Activated T-helper 1 cell treated with anti-CD3 and anti-CD28 coated beads, Interleukin-12 subunit alpha, Interleukin-12 subunit beta, Interleukin-2, Interleukin-4 antibody, amounts not matched to agents 30 ng/mL and 10 ng/mL and 1 ng/mL, durations not matched to agents 14 hours and 24 hours and 36 hours (primary cell): ENCODE measurements at regions of chrX and their contacts with region 1.

Region 1: DNA sequence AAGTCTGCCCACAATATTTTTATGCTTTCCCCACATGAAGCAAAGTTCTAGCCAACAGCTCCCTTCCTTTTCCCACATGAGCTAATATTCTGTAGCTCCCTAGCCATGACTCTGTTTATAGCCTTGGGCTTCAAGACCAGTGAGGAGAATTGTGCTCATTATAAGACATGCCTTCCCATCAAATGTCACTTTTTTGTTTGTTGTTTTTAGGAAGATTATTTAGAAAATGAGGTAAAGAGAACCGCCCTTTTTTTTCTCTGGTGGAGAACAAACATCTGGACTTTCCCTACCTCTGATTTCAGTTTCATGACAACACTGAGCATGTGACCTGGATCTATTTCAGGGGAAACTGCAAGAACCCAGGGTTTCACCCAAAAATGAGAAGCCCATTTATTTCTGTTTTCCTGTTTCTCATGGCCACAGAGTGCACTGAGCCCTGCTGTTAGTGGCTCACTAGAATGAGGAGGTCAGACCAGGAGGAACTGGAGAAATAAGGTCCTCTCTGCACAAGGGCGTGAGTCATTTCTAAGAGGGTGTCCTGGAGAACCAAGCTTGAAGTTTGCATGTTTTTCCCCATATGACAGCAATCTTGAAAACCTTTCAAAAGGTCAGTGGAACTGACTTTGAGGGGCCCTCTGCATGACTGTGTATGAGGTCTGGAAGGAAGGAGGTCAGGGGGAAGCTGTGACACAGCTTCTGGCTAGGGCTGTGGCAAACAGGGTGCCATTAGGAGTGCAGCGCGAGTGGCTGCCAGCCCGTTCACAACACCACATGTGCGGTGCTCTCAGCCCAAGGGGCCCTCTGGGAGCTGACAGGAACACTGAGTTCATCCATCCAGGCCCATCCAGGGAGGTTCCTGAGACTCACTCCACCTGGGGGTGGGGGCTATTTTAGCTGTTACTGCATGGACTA is 55.2 kb downstream of the CHST7 start:
- DNase-seq: no peak
- H3K4me3 Mint-ChIP-seq: peak overlapping the region; percentile 66
- H3K27ac Mint-ChIP-seq: peak overlapping the region; percentile 93
- H3K4me1 Mint-ChIP-seq: peaks cover 34% of the 10 kb centered on the region
- H3K27me3 Mint-ChIP-seq: no peaks in the 10 kb centered on the region

Region 2: DNA sequence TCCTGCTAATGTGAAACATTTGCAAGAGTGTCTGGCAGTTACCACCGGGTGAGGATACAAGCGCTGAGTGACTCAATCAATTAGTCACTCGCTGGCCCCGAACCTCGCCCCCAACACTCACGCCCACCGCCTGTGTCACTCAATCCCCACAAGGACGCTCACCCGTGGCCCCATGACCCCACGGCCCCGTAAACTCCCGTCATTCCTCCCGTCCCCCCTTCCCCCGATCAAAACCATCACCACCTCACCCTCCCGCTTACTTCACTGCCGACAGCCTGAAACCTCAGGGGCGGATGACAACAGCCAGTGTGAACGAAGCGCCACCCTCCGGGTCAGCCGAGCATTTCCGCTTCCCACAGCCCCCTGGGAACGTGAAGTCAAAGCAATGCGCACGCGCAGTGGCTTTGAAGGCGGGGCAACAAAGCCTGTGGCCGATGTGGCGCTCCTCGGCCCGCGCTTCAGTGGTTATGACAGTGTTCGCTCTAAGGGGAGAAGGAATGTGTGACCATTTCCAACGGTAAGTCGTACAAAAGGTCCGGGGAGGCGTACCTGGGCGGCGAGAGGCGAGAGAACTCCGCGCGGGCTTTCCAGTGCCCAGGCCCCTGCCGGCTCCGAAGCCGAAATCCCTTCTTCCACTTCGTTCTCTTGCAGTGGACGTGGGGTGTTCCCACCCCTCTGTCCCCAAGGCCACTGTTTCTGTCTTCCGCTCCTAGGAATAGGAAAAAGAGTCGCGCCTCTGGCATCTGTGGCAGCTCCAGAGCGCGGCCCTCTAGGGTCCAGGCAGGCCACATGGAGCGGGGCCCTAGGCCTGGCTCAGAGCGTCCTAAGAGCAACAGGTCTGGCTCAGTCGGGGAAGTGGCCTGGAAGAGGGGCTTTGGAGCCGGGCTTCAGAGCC is 83.4 kb before region 1 on chrX and contains the start of gene ZNF674:
- intact Hi-C with region 1: loop called (anchors 2 kb)
- DNase-seq: peak; percentile 90
- H3K4me3 Mint-ChIP-seq: peak within 1 kb of the TSS; percentile 97
- H3K27ac Mint-ChIP-seq: peak within 1 kb of the TSS; percentile 97
- H3K4me1 Mint-ChIP-seq: peaks cover 36% of the 10 kb centered on the region
- H3K27me3 Mint-ChIP-seq: no peaks in the 10 kb centered on the region
- total RNA-seq, gene ZNF674: 1.8 and 3.5 TPM in 2 replicates

Region 3: DNA sequence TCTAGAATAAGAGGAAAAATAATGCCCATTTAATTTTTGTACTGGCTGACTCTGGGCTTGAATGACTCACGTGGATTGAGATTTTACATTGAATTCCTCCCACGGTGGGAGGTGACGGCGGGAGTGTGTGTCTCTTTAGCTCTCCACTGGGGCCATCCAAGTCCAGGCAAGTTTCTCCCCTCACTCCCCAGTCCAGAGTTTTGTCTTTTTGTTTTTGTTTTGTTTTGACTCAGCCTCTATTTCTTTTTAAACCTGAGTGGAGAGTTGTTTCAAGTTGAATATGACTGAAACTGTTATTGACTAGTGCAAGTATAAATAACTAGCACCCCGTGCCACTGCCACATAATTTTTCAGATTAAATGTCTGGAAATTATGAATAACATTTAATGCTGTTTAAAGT is 41.6 kb before region 1 on chrX:
- intact Hi-C with region 1: loop called (anchors 1 kb)
- DNase-seq: no peak
- H3K4me3 Mint-ChIP-seq: peak overlapping the region; percentile 3
- H3K27ac Mint-ChIP-seq: peak overlapping the region; percentile 70
- H3K4me1 Mint-ChIP-seq: peaks cover 25% of the 10 kb centered on the region
- H3K27me3 Mint-ChIP-seq: no peaks in the 10 kb centered on the region

Region 4: DNA sequence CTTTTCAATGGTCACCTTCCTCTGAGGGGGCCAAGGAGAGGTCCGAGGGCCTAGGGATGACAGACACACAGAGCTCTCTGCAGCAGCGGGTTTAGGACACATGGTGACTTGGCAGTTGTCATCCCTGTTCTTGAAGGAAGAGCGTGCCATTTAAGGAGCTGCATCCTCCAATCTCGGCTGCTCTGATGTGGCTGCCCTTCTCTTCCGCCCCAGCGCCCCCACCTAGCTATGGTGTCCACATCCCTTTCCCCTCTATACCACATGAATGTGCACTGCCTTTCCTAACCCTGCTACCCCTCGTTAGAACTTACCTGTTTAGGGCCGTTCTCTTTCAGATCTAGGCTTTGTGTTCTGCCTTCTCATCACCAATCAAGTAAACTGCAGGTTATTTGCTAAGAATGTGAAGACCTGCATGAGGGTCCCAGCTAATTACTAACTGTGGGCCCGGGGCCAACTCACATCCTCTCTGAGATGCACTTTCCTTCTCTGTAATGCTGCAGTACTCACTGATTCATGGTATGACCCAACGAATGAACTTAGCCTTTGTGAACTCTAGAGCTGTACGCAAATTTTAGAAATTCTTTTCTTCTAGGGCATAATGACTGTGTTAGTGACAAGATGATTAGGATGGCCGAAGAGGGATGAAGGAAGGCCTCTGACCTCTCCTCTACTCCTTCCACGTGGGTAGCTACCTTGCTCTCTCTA is 16.9 kb before region 1 on chrX:
- intact Hi-C with region 1: loop called (anchors 2 kb)
- DNase-seq: peak; percentile 38
- H3K4me3 Mint-ChIP-seq: peak overlapping the region; percentile 11
- H3K27ac Mint-ChIP-seq: peak overlapping the region; percentile 70
- H3K4me1 Mint-ChIP-seq: peaks cover 66% of the 10 kb centered on the region
- H3K27me3 Mint-ChIP-seq: no peaks in the 10 kb centered on the region

Region 5: GRCh38 chrX:46617906-46618305 is 10.8 kb before region 1 on chrX:
- intact Hi-C with region 1: loop called (anchors 1 kb)
- DNase-seq: no peak
- H3K4me3 Mint-ChIP-seq: peak overlapping the region; percentile 62
- H3K27ac Mint-ChIP-seq: peak overlapping the region; percentile 86
- H3K4me1 Mint-ChIP-seq: peaks cover 33% of the 10 kb centered on the region
- H3K27me3 Mint-ChIP-seq: no peaks in the 10 kb centered on the region

Region 6: DNA sequence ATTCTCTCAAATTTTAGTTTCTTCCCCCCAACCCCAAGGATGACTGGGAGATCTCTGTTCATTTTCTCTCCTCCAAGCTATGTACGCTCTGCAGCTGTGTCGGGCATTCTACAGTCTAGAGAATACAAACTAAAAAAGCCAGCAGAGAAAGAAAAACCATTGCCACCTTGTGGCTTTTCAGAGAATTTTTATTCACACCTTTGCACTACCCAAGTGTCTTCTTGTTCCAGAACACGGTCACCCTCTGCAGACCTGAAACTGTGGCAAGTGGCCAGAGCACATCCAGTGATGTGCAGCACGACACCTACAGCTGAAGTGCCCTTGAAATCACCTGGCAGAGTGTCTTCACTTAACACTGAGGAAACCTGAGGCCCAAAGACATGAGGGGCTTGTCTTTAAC is 13.4 kb after region 1 on chrX:
- intact Hi-C with region 1: loop called (anchors 1 kb)
- DNase-seq: no peak
- H3K4me3 Mint-ChIP-seq: no peak overlapping the region
- H3K27ac Mint-ChIP-seq: no peak overlapping the region
- H3K4me1 Mint-ChIP-seq: peaks cover 32% of the 10 kb centered on the region
- H3K27me3 Mint-ChIP-seq: no peaks in the 10 kb centered on the region

Region 7: GRCh38 chrX:46704767-46705386 is 76.2 kb after region 1 on chrX:
- intact Hi-C with region 1: loop called (anchors 5 kb)
- DNase-seq: peak; percentile 32
- H3K4me3 Mint-ChIP-seq: peak overlapping the region; percentile 64
- H3K27ac Mint-ChIP-seq: peak overlapping the region; percentile 88
- H3K4me1 Mint-ChIP-seq: peaks cover 58% of the 10 kb centered on the region
- H3K27me3 Mint-ChIP-seq: no peaks in the 10 kb centered on the region